Endothelial cell of umbilical vein (primary cell): ENCODE measurements at regions of chr6 and their contacts with region 1.

Region 1: GRCh38 chr6:82006027-82006738 is 241.4 kb downstream of the IBTK start:
- DNase-seq: no peak
- H3K4me3 ChIP-seq: no peak overlapping the region
- H3K27ac ChIP-seq: no peak overlapping the region
- H3K4me1 ChIP-seq: no peaks in the 10 kb centered on the region
- H3K27me3 ChIP-seq: no peaks in the 10 kb centered on the region
- CTCF ChIP-seq: peak; percentile 61 to 66
- POLR2A ChIP-seq: no peak

Region 2: GRCh38 chr6:80742481-80742880 is 1263.7 kb before region 1 on chr6:
- CTCF ChIA-PET with region 1: no interaction called
- POLR2A ChIA-PET with region 1: no interaction called
- dilution Hi-C with region 1: no loop called
- intact Hi-C with region 1: loop called (anchors 10 kb)
- DNase-seq: peak; percentile 33
- H3K4me3 ChIP-seq: no peak overlapping the region
- H3K27ac ChIP-seq: no peak overlapping the region
- H3K4me1 ChIP-seq: no peaks in the 10 kb centered on the region
- H3K27me3 ChIP-seq: no peaks in the 10 kb centered on the region
- CTCF ChIP-seq: peak; percentile 31
- POLR2A ChIP-seq: no peak

Region 3: DNA sequence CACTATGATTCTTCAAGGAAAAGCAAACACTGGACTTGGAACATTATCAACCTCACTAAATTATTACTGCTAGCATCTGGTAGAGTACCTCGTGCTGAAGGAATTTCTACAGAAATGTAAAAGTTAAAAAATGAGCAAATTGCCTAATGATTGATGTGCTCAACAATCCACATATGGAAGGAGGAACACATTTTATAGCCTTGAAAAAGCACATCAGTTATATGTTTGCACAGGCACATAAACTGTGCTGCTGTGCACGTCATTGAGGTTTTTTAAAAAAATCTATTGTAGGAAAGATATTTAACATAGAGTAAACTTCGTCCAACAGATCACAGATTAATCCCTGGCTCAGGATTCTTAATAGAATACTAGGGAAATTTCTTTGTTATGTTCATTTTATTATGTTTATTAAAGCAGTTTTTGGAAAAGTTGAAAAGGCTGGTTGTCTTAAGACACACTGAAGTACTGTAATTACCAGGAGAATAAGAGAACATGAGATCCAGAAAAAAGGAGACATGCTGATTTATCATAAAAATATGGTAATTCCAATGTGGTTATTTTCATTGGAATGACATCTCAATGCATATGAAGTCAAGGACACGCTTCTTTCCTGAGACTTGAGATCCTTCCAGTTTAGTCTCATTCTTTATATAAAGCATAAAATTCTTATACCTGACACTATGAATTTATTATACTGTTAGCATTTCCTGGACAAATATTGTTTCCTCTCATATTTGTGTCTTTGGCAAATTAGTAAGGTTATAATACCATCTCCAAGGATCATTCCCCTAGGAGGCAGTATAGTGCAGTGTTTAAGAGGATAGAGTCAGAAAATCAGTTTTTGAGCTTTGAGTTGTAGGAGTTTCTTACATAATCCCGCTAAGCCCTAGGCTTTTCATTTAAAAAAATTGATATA is 764.8 kb before region 1 on chr6:
- CTCF ChIA-PET with region 1: interaction called, 22 read pairs
- POLR2A ChIA-PET with region 1: no interaction called
- dilution Hi-C with region 1: no loop called
- intact Hi-C with region 1: loop called (anchors 1 kb)
- DNase-seq: peak; percentile 23
- H3K4me3 ChIP-seq: no peak overlapping the region
- H3K27ac ChIP-seq: no peak overlapping the region
- H3K4me1 ChIP-seq: no peaks in the 10 kb centered on the region
- H3K27me3 ChIP-seq: no peaks in the 10 kb centered on the region
- CTCF ChIP-seq: peak; percentile 24 to 29
- POLR2A ChIP-seq: no peak

Region 4: DNA sequence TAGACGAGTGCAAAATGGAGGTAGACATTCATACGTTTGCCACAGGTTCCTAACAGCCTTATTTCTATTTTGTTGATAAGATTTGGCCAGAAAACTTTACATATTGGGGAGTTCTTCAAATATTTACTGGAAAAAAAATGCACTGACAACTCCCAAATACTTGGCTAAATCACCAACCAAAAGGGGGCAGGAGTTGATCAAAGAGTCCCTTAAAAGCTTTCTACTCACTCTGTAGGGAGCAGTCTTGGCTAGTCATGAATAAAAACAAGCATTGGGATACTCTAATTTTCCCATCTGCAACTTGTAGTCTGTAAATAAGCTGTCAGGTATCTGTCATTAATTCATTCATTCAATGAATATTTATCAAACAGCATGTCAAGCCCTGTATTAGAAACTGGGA is 272.1 kb before region 1 on chr6:
- CTCF ChIA-PET with region 1: interaction called, 35 read pairs
- POLR2A ChIA-PET with region 1: no interaction called
- dilution Hi-C with region 1: no loop called
- intact Hi-C with region 1: no loop called
- DNase-seq: peak; percentile 29
- H3K4me3 ChIP-seq: no peak overlapping the region
- H3K27ac ChIP-seq: no peak overlapping the region
- H3K4me1 ChIP-seq: no peaks in the 10 kb centered on the region
- H3K27me3 ChIP-seq: no peaks in the 10 kb centered on the region
- CTCF ChIP-seq: no peak
- POLR2A ChIP-seq: no peak

Region 5: DNA sequence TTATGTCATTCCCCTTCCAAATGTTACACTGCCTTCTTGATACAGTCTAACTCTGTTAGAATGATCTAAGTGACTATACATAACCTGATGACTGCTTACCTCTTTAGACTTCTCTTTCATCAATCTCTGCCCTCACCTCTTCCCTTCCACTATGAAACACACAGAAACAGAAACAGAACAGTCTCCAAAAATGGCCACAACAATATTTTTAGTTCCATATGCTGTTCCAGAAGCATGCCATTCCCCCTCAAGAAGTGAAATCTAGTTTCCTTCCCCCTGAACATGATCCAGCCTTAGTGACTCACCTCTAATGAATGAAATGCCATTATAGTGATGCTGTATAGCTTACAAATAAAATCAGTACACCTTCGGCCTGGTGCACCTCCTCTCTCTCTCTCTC is 24.4 kb before region 1 on chr6:
- CTCF ChIA-PET with region 1: interaction called, 9 read pairs
- POLR2A ChIA-PET with region 1: no interaction called
- dilution Hi-C with region 1: no loop called
- intact Hi-C with region 1: loop called (anchors 2 kb)
- DNase-seq: peak; percentile 68
- H3K4me3 ChIP-seq: no peak overlapping the region
- H3K27ac ChIP-seq: peak overlapping the region; percentile 66
- H3K4me1 ChIP-seq: peaks cover 15% of the 10 kb centered on the region
- H3K27me3 ChIP-seq: no peaks in the 10 kb centered on the region
- CTCF ChIP-seq: no peak
- POLR2A ChIP-seq: no peak

Region 6: GRCh38 chr6:82017288-82017687 is 11.1 kb after region 1 on chr6:
- CTCF ChIA-PET with region 1: interaction called, 13 read pairs
- POLR2A ChIA-PET with region 1: no interaction called
- dilution Hi-C with region 1: no loop called
- intact Hi-C with region 1: no loop called
- DNase-seq: peak; percentile 36
- H3K4me3 ChIP-seq: no peak overlapping the region
- H3K27ac ChIP-seq: peak overlapping the region; percentile 6
- H3K4me1 ChIP-seq: peaks cover 52% of the 10 kb centered on the region
- H3K27me3 ChIP-seq: no peaks in the 10 kb centered on the region
- CTCF ChIP-seq: no peak
- POLR2A ChIP-seq: no peak